GM10248 (cell line): ENCODE measurements at regions of chr5 and their contacts with region 1.

Region 1: GRCh38 chr5:55524816-55525215 is 9.9 kb downstream of the PLPP1 start:
- DNase-seq: no peak
- CTCF ChIP-seq: no peak

Region 2: GRCh38 chr5:55418994-55419968 is 105.5 kb before region 1 on chr5:
- CTCF ChIA-PET with region 1: no interaction called
- POLR2A ChIA-PET with region 1: no interaction called
- DNase-seq: no peak
- CTCF ChIP-seq: no peak

Region 3: DNA sequence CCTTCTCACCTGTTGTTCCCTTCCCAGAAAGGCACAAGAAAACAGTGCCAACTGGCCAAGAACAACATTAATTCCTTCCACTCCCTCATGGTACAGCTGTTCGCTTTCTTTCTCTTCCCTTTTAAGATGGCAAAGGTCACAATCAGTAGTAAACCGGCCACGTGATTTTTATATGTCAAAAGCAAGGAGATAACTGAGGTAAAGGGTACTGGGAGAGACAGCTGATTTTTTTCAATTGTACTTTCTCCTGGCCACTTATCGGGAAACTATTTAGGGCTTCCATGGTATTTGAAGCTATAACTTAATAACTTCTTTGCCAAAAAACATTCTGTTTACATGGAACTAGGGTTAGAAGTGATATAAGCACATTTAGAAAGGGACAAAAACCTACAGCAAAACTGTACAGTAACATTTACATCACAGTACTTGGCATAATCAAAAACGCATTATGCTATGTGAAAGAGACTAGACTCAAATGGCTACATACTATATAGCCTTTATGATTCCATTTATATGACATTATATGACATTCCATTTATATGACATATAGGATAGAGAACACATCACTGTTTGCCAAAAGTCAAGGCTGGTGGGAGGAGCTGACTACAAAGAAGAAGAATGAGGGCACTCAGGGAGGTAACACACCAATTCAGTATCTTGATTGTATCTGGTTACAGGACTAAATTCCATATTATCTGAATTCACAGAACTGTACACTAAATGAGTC is 14.9 kb before region 1 on chr5:
- CTCF ChIA-PET with region 1: interaction called, 11 read pairs
- POLR2A ChIA-PET with region 1: no interaction called
- DNase-seq: no peak
- CTCF ChIP-seq: no peak